Endothelial cell of umbilical vein (primary cell): ENCODE measurements at regions of chr6 and their contacts with region 1.

Region 1: DNA sequence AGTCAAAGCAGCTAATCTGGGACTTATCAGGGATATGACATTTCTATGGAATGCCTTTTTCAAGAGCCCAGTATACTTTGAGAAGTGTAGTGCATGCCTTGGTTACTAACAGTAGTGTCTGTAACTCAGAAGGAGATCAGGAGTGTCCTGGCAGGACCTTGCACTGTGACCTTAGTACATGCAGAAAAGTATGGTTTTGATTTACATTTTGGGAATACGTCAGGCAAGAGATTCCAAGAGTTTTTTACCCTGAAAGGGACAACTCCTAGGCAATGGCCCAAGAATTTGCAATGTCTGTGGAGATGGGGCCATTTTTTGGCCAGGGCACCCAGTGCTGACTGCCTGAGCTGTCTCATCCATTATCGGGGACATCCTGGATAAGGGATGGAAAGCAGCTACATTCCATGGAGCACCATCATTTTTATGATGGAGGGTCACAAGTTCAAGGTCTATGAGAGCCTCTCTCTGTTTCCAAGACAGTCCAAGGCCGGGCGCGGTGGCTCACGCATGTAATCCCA is 80.2 kb downstream of the FAM50B start:
- DNase-seq: no peak
- H3K4me3 ChIP-seq: no peak overlapping the region
- H3K27ac ChIP-seq: no peak overlapping the region
- H3K4me1 ChIP-seq: no peaks in the 10 kb centered on the region
- H3K27me3 ChIP-seq: no peaks in the 10 kb centered on the region
- CTCF ChIP-seq: no peak
- POLR2A ChIP-seq: no peak

Region 2: GRCh38 chr6:3751730-3752542 is 177.4 kb before region 1 on chr6:
- CTCF ChIA-PET with region 1: interaction called, 16 read pairs
- POLR2A ChIA-PET with region 1: no interaction called
- dilution Hi-C with region 1: no loop called
- intact Hi-C with region 1: loop called (anchors 1 kb)
- DNase-seq: peak; percentile 95
- H3K4me3 ChIP-seq: peak overlapping the region; percentile 85 to 96 (median 89)
- H3K27ac ChIP-seq: peak overlapping the region; percentile 99
- H3K4me1 ChIP-seq: peaks cover 42% of the 10 kb centered on the region
- H3K27me3 ChIP-seq: no peaks in the 10 kb centered on the region
- CTCF ChIP-seq: peak; percentile 24 to 60
- POLR2A ChIP-seq: no peak

Region 3: DNA sequence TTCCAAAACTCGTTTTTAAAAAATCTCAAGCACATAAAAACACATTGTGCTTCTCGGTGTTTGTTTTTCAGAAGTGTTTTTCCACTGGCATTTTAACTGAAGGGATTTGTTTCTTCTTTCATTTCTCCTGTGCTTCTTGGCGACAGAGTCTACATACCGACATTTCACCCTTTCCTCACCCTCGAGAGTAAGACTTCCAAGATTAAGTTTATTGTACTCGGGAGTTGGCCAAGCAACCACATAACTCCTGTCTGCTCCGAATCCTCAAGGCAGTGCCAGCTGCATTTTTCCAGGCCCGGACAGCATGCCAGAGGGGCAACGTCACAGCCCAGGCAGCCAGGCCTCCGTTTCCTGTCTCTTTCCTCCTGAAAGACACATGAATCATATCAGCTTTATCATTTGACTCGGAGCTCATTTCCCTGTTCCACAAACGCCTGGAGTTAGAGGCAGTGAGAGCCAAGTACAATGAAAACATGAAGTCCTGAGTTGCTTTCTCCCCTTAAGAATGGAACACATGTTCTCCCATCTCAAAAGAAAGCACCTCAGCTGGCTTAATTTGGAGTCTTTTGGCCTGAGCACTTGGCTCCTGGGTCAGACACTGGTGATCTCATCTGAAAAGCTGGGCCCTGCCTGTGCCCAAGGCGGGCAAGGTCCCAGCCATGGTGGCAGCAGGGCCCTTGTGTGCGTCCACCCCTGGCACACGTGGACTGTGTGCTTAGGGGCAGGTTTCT is 103.3 kb before region 1 on chr6:
- CTCF ChIA-PET with region 1: interaction called, 8 read pairs
- POLR2A ChIA-PET with region 1: no interaction called
- dilution Hi-C with region 1: no loop called
- intact Hi-C with region 1: loop called (anchors 1 kb)
- DNase-seq: peak; percentile 100
- H3K4me3 ChIP-seq: peak overlapping the region in 1 of 3 experiments; percentile 15
- H3K27ac ChIP-seq: peak overlapping the region; percentile 96
- H3K4me1 ChIP-seq: peaks cover 43% of the 10 kb centered on the region
- H3K27me3 ChIP-seq: no peaks in the 10 kb centered on the region
- CTCF ChIP-seq: no peak
- POLR2A ChIP-seq: no peak

Region 4: DNA sequence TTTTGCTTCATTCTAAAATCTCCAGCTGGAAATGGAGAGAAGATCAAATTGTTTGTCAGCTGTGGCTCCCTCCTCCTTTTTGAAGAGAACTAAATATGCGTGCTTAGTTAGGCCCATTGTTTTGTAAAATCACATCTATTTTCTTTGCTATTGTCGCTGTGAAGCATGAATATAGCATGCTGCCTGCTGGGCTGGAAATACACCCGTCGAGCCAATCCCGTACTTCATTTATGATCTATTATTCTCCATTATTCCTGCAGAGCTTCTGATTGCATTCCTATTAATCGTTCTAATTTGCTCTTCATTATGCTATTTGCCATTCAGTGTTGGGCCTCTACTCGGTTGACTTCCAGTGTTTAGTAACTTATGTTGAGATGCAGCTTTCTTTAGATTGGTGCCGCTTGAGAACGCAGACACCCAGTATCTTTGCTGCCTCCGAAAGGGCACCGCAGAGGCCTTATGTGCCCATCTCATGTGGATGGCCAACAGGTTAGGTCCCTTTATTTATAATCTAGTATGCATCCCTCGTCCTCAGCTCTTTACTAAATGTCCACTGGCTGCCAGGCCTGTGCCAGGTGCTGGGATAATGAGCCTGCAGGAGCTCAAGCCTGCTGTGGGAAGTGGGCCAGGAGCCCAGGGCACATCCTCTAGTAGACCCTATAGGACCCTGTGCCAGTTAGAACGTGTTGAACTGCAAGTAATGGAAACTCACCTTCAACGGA is 34.6 kb before region 1 on chr6:
- CTCF ChIA-PET with region 1: interaction called, 18 read pairs
- POLR2A ChIA-PET with region 1: no interaction called
- dilution Hi-C with region 1: no loop called
- intact Hi-C with region 1: no loop called
- DNase-seq: no peak
- H3K4me3 ChIP-seq: no peak overlapping the region
- H3K27ac ChIP-seq: no peak overlapping the region
- H3K4me1 ChIP-seq: no peaks in the 10 kb centered on the region
- H3K27me3 ChIP-seq: no peaks in the 10 kb centered on the region
- CTCF ChIP-seq: no peak
- POLR2A ChIP-seq: no peak

Region 5: GRCh38 chr6:3939964-3940363 is 10.6 kb after region 1 on chr6:
- CTCF ChIA-PET with region 1: no interaction called
- POLR2A ChIA-PET with region 1: no interaction called
- dilution Hi-C with region 1: no loop called
- intact Hi-C with region 1: no loop called
- DNase-seq: no peak
- H3K4me3 ChIP-seq: no peak overlapping the region
- H3K27ac ChIP-seq: no peak overlapping the region
- H3K4me1 ChIP-seq: peaks cover 4% of the 10 kb centered on the region
- H3K27me3 ChIP-seq: peaks cover 2 to 8% of the 10 kb centered on the region in 2 experiments
- CTCF ChIP-seq: no peak
- POLR2A ChIP-seq: no peak

Region 6: DNA sequence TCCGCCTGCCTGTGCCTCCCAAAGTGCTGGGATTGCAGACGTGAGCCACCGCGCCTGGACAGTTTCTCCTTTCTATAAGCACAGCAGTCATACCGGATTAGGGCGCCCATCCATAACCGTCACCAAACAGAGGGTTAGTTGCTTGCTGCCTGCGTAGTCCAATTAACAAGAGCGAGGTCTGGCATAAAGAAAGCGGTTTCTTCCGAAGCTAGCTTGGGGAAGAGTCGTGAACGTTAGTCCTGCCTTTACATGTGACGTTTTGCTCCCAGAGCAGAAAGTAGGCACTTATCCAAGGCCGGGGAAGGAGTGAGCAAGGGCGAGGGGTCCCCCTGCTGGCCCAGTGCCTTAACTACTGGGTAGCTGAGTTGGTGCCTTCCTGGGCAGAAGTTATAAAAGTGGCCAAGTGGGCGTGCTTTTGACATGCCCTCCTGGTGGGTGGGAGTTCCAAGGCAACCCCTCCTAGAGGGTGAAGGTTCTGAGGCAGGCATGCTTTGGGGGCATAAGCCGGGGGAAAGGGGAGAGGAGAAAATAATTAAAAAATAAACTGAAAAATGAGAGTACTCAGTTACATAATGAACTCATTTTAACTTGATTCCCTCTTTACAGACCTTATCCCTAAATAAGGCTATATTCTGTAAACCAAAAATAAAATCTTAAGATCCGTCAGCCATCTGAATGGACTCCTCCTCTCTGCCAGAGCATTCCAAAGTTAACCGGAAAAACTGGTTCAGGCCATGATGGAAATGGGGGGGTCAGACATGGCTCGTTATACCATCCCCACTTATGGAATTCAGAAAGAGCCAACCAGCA is 61.6 kb after region 1 on chr6:
- CTCF ChIA-PET with region 1: interaction called, 16 read pairs
- POLR2A ChIA-PET with region 1: no interaction called
- dilution Hi-C with region 1: no loop called
- intact Hi-C with region 1: no loop called
- DNase-seq: peak; percentile 91
- H3K4me3 ChIP-seq: no peak overlapping the region
- H3K27ac ChIP-seq: no peak overlapping the region
- H3K4me1 ChIP-seq: peaks cover 17% of the 10 kb centered on the region
- H3K27me3 ChIP-seq: no peaks in the 10 kb centered on the region
- CTCF ChIP-seq: peak; percentile 92 to 94
- POLR2A ChIP-seq: no peak